AG04450 (cell line): ENCODE measurements at regions of chr19 and their contacts with region 1.

Region 1: DNA sequence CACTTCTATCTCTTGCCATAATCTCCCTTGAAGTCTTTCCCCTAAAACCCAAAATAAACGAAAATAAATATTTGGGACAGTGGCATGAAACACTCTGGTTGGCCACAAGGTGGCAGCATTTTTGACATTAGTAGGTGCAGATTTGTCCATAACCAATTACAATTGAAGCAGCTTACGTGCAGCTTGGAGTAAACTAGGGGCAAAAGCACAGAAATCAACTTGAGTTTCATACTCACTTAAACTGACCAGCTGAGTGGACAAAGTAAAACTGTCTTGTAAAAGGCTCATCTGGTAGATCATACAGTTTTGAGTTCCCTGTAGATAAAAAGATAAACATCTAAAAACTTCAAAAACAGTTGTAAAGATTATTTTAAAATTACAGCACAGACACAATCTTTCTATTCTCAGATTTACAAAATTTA is 18.8 kb downstream of the PDCD5 start:
- DNase-seq: peak; percentile 36
- H3K4me3 ChIP-seq: no peak overlapping the region
- H3K27ac ChIP-seq: no peak overlapping the region
- H3K27me3 ChIP-seq: no peaks in the 10 kb centered on the region
- CTCF ChIP-seq: peak; percentile 75

Region 2: DNA sequence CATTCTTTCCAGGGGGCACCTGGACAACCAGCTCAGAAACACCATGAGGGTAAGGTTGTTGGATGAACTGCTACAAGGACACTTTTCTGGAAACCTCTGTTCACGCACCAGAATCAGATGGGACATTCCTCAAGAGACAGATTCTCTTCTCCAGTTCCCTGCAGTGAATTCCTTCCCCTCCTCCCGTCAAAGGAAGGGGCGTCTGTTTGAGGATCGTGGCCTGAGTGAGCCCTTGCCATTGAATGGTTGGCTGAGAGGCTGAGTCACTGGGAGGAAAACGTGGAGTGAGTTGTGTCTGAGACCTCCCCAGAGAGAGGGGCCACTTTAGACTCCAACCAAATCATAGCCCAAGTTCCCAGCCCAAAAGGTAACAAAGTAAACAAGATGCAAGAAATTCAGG is 333.8 kb before region 1 on chr19:
- CTCF ChIA-PET with region 1: no interaction called
- POLR2A ChIA-PET with region 1: no interaction called
- DNase-seq: no peak
- H3K4me3 ChIP-seq: no peak overlapping the region
- H3K27ac ChIP-seq: no peak overlapping the region
- H3K27me3 ChIP-seq: no peaks in the 10 kb centered on the region
- CTCF ChIP-seq: no peak

Region 3: GRCh38 chr19:32580901-32581703 is 18.6 kb before region 1 on chr19 and contains the start of gene PDCD5:
- CTCF ChIA-PET with region 1: interaction called, 12 read pairs
- POLR2A ChIA-PET with region 1: no interaction called
- DNase-seq: peak; percentile 68
- H3K4me3 ChIP-seq: peak within 1 kb of the TSS; percentile 90
- H3K27ac ChIP-seq: peak within 1 kb of the TSS; percentile 78
- H3K27me3 ChIP-seq: no peaks in the 10 kb centered on the region
- CTCF ChIP-seq: no peak
- polyA plus RNA-seq, gene PDCD5: 91.0 and 124 TPM in 2 replicates

Region 4: GRCh38 chr19:32613008-32613407 is 13.3 kb after region 1 on chr19:
- CTCF ChIA-PET with region 1: interaction called, 15 read pairs
- POLR2A ChIA-PET with region 1: no interaction called
- DNase-seq: no peak
- H3K4me3 ChIP-seq: no peak overlapping the region
- H3K27ac ChIP-seq: no peak overlapping the region
- H3K27me3 ChIP-seq: no peaks in the 10 kb centered on the region
- CTCF ChIP-seq: no peak